ENCODE measurements at regions of chr13 and their contacts with region 1.

Region 1: DNA sequence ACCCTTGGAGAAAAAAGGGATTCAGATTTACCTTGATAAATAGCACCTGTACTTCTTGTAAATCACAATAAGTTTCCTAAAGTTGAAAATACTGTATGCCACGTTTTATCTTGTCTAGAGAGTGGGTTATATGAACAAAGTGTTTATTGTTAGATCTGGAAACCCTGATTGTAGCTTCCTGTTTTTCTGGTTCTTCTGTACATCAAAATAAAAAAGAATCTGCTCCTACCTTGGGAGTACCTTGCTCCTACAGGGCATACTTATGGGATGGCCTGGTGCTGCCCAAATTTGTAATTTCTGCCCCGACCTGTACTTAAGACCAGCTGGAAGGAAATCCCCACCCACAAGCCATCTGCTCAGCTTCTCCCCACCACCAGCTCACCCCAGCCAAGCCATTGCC is 241.1 kb downstream of the SLC7A1 start:
- DNase-seq: no peak
- H3K4me3 Mint-ChIP-seq: no peak overlapping the region
- H3K27ac Mint-ChIP-seq: no peak overlapping the region
- H3K4me1 Mint-ChIP-seq: no peaks in the 10 kb centered on the region
- H3K27me3 Mint-ChIP-seq: peaks cover 7% of the 10 kb centered on the region

Region 2: GRCh38 chr13:28423010-28423409 is 931.4 kb before region 1 on chr13:
- CTCF ChIA-PET with region 1: no interaction called
- intact Hi-C with region 1: no loop called
- DNase-seq: peak; percentile 8
- H3K4me3 Mint-ChIP-seq: no peak overlapping the region
- H3K27ac Mint-ChIP-seq: no peak overlapping the region
- H3K4me1 Mint-ChIP-seq: peaks cover 12% of the 10 kb centered on the region
- H3K27me3 Mint-ChIP-seq: peaks cover 2% of the 10 kb centered on the region

Region 3: GRCh38 chr13:29210676-29211075 is 143.7 kb before region 1 on chr13:
- CTCF ChIA-PET with region 1: no interaction called
- intact Hi-C with region 1: loop called (anchors 2 kb)
- DNase-seq: no peak
- H3K4me3 Mint-ChIP-seq: no peak overlapping the region
- H3K27ac Mint-ChIP-seq: no peak overlapping the region
- H3K4me1 Mint-ChIP-seq: no peaks in the 10 kb centered on the region
- H3K27me3 Mint-ChIP-seq: no peaks in the 10 kb centered on the region

Region 4: GRCh38 chr13:29328501-29328900 is 25.9 kb before region 1 on chr13:
- CTCF ChIA-PET with region 1: no interaction called
- intact Hi-C with region 1: no loop called
- DNase-seq: no peak
- H3K4me3 Mint-ChIP-seq: no peak overlapping the region
- H3K27ac Mint-ChIP-seq: no peak overlapping the region
- H3K4me1 Mint-ChIP-seq: no peaks in the 10 kb centered on the region
- H3K27me3 Mint-ChIP-seq: peaks cover 3% of the 10 kb centered on the region